ENCODE measurements at regions of chr12 and their contacts with region 1.

Region 1: DNA sequence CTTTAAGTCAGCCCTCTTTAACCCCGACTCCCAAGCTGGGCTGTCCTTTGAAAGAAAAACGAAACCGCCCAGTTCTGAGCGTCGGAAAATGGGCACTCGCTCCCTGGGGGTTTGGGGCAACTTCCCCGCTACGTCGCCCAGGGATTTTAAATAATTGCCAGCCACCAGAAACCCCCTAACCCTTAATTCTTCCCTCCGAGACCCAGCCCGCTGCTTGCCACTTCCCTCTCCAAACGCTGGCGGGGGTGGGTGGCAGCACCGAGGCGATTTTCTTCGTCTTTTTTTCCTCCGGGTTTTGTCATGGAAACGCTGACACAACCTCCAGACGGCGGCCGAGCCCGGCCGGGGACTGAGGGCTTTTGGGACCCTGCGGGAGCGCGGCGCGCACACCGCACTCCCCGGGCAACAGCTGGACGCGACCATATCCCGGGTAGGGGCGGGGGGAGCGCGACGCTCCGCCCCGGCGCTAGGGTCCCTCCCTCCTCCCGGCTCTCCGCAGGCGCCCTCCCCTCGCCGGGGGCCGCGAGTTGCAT is at the start of gene CHST11:
- DNase-seq: peak; percentile 84
- H3K4me3 Mint-ChIP-seq: peak within 1 kb of the TSS; percentile 99
- H3K27ac Mint-ChIP-seq: peak within 1 kb of the TSS; percentile 94
- H3K4me1 Mint-ChIP-seq: peaks cover 29% of the 10 kb centered on the region
- H3K27me3 Mint-ChIP-seq: peaks cover 4% of the 10 kb centered on the region
- total RNA-seq, gene CHST11: 124 to 125 TPM

Region 2: GRCh38 chr12:104095289-104095688 is 361.2 kb before region 1 on chr12:
- CTCF ChIA-PET with region 1: no interaction called
- POLR2A ChIA-PET with region 1: no interaction called
- DNase-seq: no peak
- H3K4me3 Mint-ChIP-seq: no peak overlapping the region
- H3K27ac Mint-ChIP-seq: no peak overlapping the region
- H3K4me1 Mint-ChIP-seq: peaks cover 9% of the 10 kb centered on the region
- H3K27me3 Mint-ChIP-seq: no peaks in the 10 kb centered on the region

Region 3: DNA sequence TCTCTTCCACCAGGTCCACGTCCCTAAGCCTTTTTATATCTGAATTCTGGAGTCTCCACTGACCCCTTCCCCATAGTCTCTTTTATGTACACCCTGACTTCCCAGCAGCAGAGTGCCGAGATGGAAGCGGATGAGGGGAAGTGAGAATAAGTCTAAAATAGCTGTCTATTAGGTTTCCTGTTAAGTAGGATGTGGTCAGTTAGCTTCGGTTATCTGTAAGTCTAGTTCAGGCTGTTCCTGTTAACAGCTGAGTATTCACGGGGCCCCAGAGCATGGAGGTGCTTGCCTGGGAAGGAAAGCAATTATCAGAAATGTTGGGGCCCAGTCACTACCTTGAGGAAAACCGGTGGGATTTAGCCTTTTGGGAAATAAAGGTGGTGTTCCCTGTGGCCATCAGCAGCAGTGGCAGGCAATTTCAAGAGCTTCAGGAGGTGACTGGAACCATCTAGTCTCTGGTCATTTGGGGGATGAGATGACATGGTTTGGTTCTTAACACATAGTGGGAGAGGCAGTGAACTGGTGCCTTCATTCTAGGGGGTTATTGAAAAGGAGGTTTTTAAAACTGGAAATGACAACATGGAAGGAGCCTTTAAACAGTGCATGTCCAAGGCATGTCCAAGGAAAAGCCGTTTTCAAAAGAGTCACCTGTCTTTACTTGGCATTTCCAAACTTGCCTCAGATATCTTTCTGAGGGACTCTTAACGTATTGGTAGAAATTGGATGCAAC is 22.1 kb after region 1 on chr12:
- CTCF ChIA-PET with region 1: interaction called, 30 read pairs
- POLR2A ChIA-PET with region 1: interaction called, 106 read pairs
- DNase-seq: peak; percentile 55
- H3K4me3 Mint-ChIP-seq: peak overlapping the region; percentile 85
- H3K27ac Mint-ChIP-seq: peak overlapping the region; percentile 96
- H3K4me1 Mint-ChIP-seq: peaks cover 88% of the 10 kb centered on the region
- H3K27me3 Mint-ChIP-seq: no peaks in the 10 kb centered on the region

Region 4: GRCh38 chr12:104494137-104494792 is 37.8 kb after region 1 on chr12:
- CTCF ChIA-PET with region 1: interaction called, 10 read pairs
- POLR2A ChIA-PET with region 1: interaction called, 91 read pairs
- DNase-seq: peak; percentile 69
- H3K4me3 Mint-ChIP-seq: peak overlapping the region; percentile 64
- H3K27ac Mint-ChIP-seq: peak overlapping the region; percentile 91
- H3K4me1 Mint-ChIP-seq: peaks cover 93% of the 10 kb centered on the region
- H3K27me3 Mint-ChIP-seq: no peaks in the 10 kb centered on the region

Region 5: GRCh38 chr12:104569346-104570173 is 113.1 kb after region 1 on chr12:
- CTCF ChIA-PET with region 1: interaction called, 10 read pairs
- POLR2A ChIA-PET with region 1: interaction called, 28 read pairs
- DNase-seq: peak; percentile 72
- H3K4me3 Mint-ChIP-seq: peak overlapping the region; percentile 32
- H3K27ac Mint-ChIP-seq: peak overlapping the region; percentile 87
- H3K4me1 Mint-ChIP-seq: peaks cover 72% of the 10 kb centered on the region
- H3K27me3 Mint-ChIP-seq: no peaks in the 10 kb centered on the region

Measured in activated CD4-positive, alpha-beta memory T cell treated with anti-CD3 and anti-CD28 coated beads, Interleukin-2, amount 10 ng/mL, durations not matched to agents 7 days and 5 days (primary cell).